GM13977 (cell line): ENCODE measurements at regions of chr20 and their contacts with region 1.

Region 1: GRCh38 chr20:53570521-53571357 is 22.9 kb downstream of the ZNF217 start:
- DNase-seq: no peak
- CTCF ChIP-seq: no peak

Region 2: DNA sequence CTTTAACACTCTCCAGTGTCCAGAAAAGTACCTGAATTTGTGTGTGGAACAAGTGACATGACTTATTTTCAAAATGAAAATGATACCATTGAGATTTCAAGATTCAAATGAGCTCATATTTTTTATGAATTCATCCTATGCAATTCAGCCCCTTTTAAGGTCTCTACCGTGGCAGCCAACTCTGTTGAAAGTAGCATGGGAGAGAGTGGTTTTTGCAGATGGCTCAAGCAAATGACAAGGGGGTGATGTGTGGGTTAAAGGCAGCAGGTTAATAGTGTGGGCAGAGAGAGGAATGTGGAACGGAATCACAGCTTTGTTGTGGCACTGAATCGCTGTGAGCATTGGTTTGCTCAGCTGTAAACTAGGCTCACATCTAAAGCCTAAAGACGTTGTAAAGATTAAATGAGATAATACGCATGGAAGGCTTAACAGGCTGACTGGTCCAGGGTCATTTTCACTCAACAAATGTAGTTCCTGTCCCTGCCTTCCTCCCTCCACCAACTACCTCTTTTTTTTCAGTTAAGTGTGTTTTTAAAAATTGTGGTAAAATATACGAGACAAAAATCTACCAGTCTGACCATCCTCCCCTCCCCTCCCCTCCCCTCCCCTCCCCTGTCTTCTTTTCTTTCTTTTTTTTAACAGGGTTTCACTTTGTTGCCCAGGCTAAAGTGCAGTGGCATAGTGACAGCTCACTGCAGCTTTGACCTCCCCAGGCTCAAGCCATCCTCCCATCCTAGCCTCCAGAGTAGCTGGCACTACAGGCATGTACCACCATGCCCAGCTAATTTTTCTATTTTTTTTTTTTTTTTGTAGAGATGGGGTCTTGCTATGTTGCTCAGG is 137.6 kb after region 1 on chr20:
- in situ Hi-C with region 1: no loop called
- DNase-seq: peak; percentile 58
- CTCF ChIP-seq: no peak

Region 3: GRCh38 chr20:54199721-54200176 is 629.0 kb after region 1 on chr20:
- in situ Hi-C with region 1: loop called (anchors 25 kb)
- DNase-seq: peak; percentile 64
- CTCF ChIP-seq: peak; percentile 90